Lower leg skin (tissue), 4 donors: ENCODE measurements at regions of chr12 and their contacts with region 1.

Region 1: GRCh38 chr12:30082381-30082780 is 298.6 kb upstream of the TMTC1 start:
- DNase-seq: no peak
- H3K4me3 ChIP-seq: no peak overlapping the region
- CTCF ChIP-seq: no peak
- POLR2A ChIP-seq: no peak

Region 2: GRCh38 chr12:28535216-28535615 is 1547.2 kb before region 1 on chr12:
- intact Hi-C with region 1: loop called (anchors 5 kb)
- DNase-seq: no peak
- H3K4me3 ChIP-seq: no peak overlapping the region
- CTCF ChIP-seq: no peak
- POLR2A ChIP-seq: no peak